ENCODE measurements at regions of chr6 and their contacts with region 1.

Region 1: DNA sequence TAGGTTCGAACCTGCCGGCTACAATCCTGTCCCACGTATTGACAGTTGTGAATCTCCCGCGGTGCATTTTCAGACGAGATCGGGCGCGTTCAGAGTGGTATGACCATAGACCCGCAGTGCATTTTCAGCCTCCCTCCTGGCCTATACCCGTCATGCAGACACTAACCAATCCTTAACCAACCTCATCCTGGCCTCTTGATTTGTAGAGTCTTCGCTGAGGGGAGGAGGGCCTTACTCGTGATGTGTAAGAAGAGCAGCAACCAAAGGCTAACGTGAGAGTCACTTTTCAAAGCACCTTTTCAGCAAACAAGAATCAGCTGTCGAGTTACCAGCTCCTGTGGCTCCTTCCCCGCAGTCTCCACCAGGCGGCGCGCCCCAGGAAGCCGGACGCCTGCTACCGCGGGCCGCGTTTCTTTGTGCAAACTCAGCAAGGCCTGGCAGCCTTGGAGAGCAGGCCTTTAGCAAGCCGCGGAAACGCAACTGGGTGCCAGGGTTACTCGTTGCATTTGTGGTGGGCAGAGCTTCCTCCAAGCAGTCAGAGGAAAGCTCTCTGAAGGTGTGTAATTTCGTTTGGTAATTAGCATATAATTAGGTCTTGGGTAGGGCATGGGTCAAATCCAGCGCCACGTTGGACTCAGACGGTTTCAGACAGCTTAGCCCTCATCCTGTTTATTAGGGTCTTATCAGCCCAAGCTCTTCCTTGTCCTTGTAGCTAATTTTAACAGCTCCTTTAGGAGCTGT is 139.8 kb downstream of the OR2B2 start:
- DNase-seq: peak; percentile 72
- H3K27ac ChIP-seq: no peak overlapping the region
- CTCF ChIP-seq: peak; percentile 90

Region 2: DNA sequence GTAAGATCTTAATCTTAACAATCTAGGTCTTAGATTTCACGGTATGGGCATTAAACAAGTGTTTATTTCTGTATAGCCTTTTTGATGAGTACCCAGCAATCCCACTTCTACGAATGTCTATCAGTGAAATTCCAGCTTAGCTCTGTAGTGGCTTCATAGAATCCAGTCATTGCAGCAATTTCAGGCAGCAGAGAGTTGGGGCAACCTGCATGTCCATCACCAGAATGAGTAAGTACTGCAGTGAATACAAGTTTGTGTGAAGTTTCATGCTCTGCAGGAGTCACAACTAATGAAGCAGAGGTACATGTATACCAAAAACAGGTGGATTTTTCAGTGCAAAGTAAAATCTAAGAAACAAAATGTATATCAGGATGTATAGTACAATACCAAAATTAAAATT is 12.0 kb before region 1 on chr6:
- CTCF ChIA-PET with region 1: interaction called, 10 read pairs
- POLR2A ChIA-PET with region 1: no interaction called
- DNase-seq: no peak
- H3K27ac ChIP-seq: no peak overlapping the region
- CTCF ChIP-seq: no peak

Region 3: DNA sequence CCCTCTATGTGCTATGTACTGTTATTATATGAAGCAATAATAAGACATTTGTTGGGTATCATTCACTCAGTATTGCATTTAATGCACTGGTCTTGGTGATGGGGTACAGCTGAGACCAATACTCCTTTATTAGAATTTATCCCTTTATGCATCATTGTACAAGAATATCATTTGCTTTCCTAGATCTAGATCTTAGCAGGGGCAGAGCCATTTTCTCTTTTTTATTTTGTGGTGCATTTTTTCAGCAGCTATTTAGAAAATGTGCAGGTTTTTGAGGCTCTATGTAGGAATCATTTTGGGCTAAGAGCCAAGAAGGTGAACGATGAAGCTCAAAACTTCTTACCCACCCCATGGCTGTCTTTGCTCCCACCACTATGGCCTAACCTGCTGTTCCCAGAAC is 25.5 kb after region 1 on chr6:
- CTCF ChIA-PET with region 1: interaction called, 10 read pairs
- POLR2A ChIA-PET with region 1: no interaction called
- DNase-seq: no peak
- H3K27ac ChIP-seq: no peak overlapping the region
- CTCF ChIP-seq: no peak

Measured in RWPE1 (cell line).